Natural killer cell (primary cell): ENCODE measurements at regions of chr5 and their contacts with region 1.

Region 1: DNA sequence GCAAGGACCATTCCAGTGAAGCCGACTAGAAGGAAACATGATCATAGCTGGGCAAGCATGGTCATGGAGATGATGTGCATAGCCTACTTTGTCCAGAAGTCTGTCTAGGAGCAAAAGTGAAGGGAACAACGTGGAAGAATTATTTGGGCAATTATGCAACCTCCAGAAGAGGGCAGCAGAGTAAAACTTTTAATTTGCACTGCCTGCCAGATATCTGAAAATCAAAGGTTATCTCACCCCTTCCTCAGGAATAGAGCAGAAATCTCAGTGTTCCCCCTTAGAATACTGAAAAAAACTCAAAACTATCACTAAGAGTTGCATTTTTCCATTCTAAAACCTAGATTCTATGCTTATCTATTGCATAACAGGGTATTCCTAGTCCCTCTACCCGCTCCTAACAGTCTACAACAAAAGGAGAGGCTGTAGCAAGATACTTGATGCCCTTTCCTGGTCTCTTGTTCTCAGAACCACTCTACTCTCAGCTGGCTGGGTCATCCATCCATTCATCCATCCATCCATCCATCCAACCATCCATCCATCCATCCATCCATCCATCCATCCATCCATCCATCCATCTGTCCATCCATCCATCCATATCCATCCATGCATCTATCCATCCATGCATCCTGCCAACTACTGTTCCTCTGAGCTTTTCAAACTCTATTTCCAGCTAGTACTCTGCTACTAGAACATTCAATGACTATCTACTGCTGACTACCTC is 8.4 kb upstream of the SETD9 start:
- DNase-seq: peak in 1 of 2 donors; percentile 77
- ATAC-seq: peak; percentile 49 to 70 (median 69)
- H3K4me3 ChIP-seq: no peak overlapping the region
- H3K4me3 Mint-ChIP-seq: no peak overlapping the region
- H3K27ac ChIP-seq: no peak overlapping the region
- H3K27ac Mint-ChIP-seq: no peak overlapping the region
- H3K4me1 ChIP-seq: no peaks in the 10 kb centered on the region
- H3K4me1 Mint-ChIP-seq: no peaks in the 10 kb centered on the region
- H3K27me3 ChIP-seq: peaks cover 2% of the 10 kb centered on the region
- H3K27me3 Mint-ChIP-seq: peaks cover 0 to 11% of the 10 kb centered on the region in 2 donors
- CTCF ChIP-seq: peak; percentile 79

Region 2: GRCh38 chr5:57094753-57095683 is 194.0 kb after region 1 on chr5:
- intact Hi-C with region 1: loop called (anchors 1 kb)
- DNase-seq: peak in 1 of 2 donors; percentile 20
- ATAC-seq: no peak
- H3K4me3 ChIP-seq: no peak overlapping the region
- H3K4me3 Mint-ChIP-seq: no peak overlapping the region
- H3K27ac ChIP-seq: no peak overlapping the region
- H3K27ac Mint-ChIP-seq: no peak overlapping the region
- H3K4me1 ChIP-seq: no peaks in the 10 kb centered on the region
- H3K4me1 Mint-ChIP-seq: no peaks in the 10 kb centered on the region
- H3K27me3 ChIP-seq: no peaks in the 10 kb centered on the region
- H3K27me3 Mint-ChIP-seq: peaks cover 15 to 24% of the 10 kb centered on the region in 2 donors
- CTCF ChIP-seq: no peak

Region 3: DNA sequence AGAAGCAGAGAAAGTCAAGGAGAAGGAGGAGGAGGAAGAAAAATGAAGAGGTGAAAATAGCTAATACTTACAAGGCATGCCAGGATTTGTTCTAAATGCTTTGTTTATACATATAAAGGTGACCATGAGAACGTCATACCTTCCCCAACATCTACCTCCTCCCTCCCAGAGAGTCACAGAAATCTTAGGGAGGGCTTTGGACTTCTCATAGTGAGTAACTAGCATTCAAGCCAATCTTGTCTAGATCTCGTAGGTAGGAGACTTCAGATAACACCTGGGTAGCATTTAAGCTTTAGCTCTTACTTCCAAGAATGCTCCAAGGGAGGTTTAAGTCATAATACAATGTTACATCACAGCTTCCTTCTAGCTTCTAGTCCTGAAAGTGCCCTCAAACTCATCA is 236.4 kb after region 1 on chr5:
- intact Hi-C with region 1: loop called (anchors 1 kb)
- DNase-seq: no peak
- ATAC-seq: no peak
- H3K4me3 ChIP-seq: no peak overlapping the region
- H3K4me3 Mint-ChIP-seq: no peak overlapping the region
- H3K27ac ChIP-seq: no peak overlapping the region
- H3K27ac Mint-ChIP-seq: no peak overlapping the region
- H3K4me1 ChIP-seq: no peaks in the 10 kb centered on the region
- H3K4me1 Mint-ChIP-seq: no peaks in the 10 kb centered on the region
- H3K27me3 ChIP-seq: no peaks in the 10 kb centered on the region
- H3K27me3 Mint-ChIP-seq: peaks cover 0 to 5% of the 10 kb centered on the region in 2 donors
- CTCF ChIP-seq: no peak

Region 4: GRCh38 chr5:57221049-57221568 is 320.1 kb after region 1 on chr5:
- intact Hi-C with region 1: loop called (anchors 1 kb)
- DNase-seq: peak in 1 of 2 donors; percentile 87
- ATAC-seq: peak; percentile 78 to 90 (median 87)
- H3K4me3 ChIP-seq: no peak overlapping the region
- H3K4me3 Mint-ChIP-seq: peak overlapping the region; percentile 56
- H3K27ac ChIP-seq: no peak overlapping the region
- H3K27ac Mint-ChIP-seq: peak overlapping the region; percentile 81 to 89
- H3K4me1 ChIP-seq: no peaks in the 10 kb centered on the region
- H3K4me1 Mint-ChIP-seq: peaks cover 26 to 28% of the 10 kb centered on the region in 2 donors
- H3K27me3 ChIP-seq: no peaks in the 10 kb centered on the region
- H3K27me3 Mint-ChIP-seq: no peaks in the 10 kb centered on the region
- CTCF ChIP-seq: peak; percentile 93